HEK293 (cell line): ENCODE measurements at regions of chr11 and their contacts with region 1.

Region 1: GRCh38 chr11:134275534-134276395 is at the start of gene GLB1L3:
- H3K4me3 ChIP-seq: peak within 1 kb of the TSS; percentile 52
- H3K27ac ChIP-seq: peak within 1 kb of the TSS; percentile 69
- H3K4me1 ChIP-seq: peaks cover 7% of the 10 kb centered on the region
- CTCF ChIP-seq: peak; percentile 91

Region 2: DNA sequence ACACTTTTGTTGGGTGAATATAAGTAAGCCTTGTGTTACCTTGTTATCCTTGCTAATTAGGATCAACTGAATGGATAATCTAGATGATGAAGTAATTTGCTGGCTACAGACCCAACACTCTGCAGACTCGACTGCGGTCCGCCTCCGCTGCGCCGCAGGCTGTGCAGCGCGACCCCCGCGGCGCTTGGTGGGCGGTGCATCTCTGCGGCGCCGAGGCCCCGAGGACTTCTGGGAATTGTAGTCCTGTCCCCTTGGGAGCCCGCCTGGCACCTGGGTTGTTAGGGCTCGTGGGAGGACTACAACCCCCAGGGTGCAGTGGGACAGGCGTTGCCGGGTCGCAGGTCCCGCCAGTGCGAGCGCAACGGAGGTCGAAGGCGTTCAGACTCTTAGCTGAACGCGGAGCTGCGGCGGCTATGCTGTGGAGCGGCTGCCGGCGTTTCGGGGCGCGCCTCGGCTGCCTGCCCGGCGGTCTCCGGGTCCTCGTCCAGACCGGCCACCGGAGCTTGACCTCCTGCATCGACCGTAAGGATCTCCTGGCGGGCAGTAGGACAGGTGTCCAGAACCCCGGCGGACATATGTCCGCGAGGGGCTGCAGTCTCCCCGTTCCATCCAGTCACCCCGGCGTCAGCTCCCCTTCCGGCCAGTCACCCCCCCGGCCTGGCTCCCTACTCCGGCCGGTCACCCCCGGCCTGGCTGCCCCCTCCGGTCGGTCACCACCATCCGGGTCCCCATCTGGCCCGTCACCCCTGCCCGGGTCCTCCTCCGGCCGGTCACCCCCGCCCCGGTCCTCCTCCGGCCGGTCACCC is 22.4 kb before region 1 on chr11 and contains the starts of genes ACAD8 and THYN1:
- CTCF ChIA-PET with region 1: interaction called, 5 read pairs
- POLR2A ChIA-PET with region 1: interaction called, 11 read pairs
- H3K4me3 ChIP-seq: peak within 1 kb of the TSS; percentile 79
- H3K27ac ChIP-seq: peak within 1 kb of the TSS; percentile 53; the same call in 1 of the 2 replicates
- H3K4me1 ChIP-seq: no peaks in the 10 kb centered on the region
- CTCF ChIP-seq: no peak; the same call in 1 of the 2 replicates

Region 3: GRCh38 chr11:134261626-134262488 is 13.9 kb before region 1 on chr11:
- CTCF ChIA-PET with region 1: interaction called, 35 read pairs
- POLR2A ChIA-PET with region 1: interaction called, 7 read pairs
- H3K4me3 ChIP-seq: no peak overlapping the region
- H3K27ac ChIP-seq: no peak overlapping the region
- H3K4me1 ChIP-seq: no peaks in the 10 kb centered on the region
- CTCF ChIP-seq: no peak